Heart right ventricle (tissue), 16 donors: ENCODE measurements at regions of chr1 and their contacts with region 1.

Region 1: GRCh38 chr1:45730475-45731339 is 19.7 kb downstream of the IPP start:
- DNase-seq: no peak
- ATAC-seq: no peak
- H3K4me3 ChIP-seq: no peak overlapping the region
- H3K27ac ChIP-seq: peak overlapping the region in 1 of 10 donors; percentile 28
- H3K4me1 ChIP-seq: peaks cover 0 to 9% (median 0%) of the 10 kb centered on the region in 9 donors
- H3K27me3 ChIP-seq: no peaks in the 10 kb centered on the region
- CTCF ChIP-seq: no peak

Region 2: DNA sequence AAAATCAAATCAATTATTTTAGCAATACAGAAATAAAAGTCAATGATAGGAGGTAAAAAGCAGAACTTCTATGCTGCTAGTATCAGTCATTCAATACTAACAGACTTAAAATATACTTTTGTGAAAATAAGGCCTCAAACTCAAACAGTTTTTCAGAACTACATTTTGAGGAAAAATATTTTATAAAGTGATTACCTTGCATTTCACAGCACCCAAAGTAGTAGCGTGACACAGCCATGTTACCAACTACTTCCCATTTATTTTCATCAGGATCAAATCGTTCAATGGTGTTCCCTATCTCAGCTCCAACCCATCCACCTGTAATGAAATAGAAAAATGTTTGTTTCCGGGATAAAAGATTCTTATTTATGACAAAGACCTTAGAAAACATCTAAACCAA is 14.0 kb before region 1 on chr1:
- intact Hi-C with region 1: loop called in 1 of 10 experiments (anchors 2 kb)
- DNase-seq: no peak
- ATAC-seq: no peak
- H3K4me3 ChIP-seq: no peak overlapping the region
- H3K27ac ChIP-seq: no peak overlapping the region
- H3K4me1 ChIP-seq: no peaks in the 10 kb centered on the region
- H3K27me3 ChIP-seq: no peaks in the 10 kb centered on the region
- CTCF ChIP-seq: no peak